GM23248 (cell line): ENCODE measurements at regions of chrX and their contacts with region 1.

Region 1: GRCh38 chrX:85111347-85111746 is 107.7 kb downstream of the APOOL start:
- DNase-seq: peak; percentile 31
- H3K4me3 ChIP-seq: no peak overlapping the region
- H3K27ac ChIP-seq: no peak overlapping the region
- H3K4me1 ChIP-seq: no peaks in the 10 kb centered on the region
- H3K27me3 ChIP-seq: no peaks in the 10 kb centered on the region

Region 2: GRCh38 chrX:84993150-84993549 is 118.2 kb before region 1 on chrX:
- in situ Hi-C with region 1: no loop called
- DNase-seq: no peak
- H3K4me3 ChIP-seq: no peak overlapping the region
- H3K27ac ChIP-seq: no peak overlapping the region
- H3K4me1 ChIP-seq: no peaks in the 10 kb centered on the region
- H3K27me3 ChIP-seq: no peaks in the 10 kb centered on the region

Region 3: GRCh38 chrX:85213792-85214530 is 102.6 kb after region 1 on chrX:
- in situ Hi-C with region 1: no loop called
- DNase-seq: no peak
- H3K4me3 ChIP-seq: no peak overlapping the region
- H3K27ac ChIP-seq: no peak overlapping the region
- H3K4me1 ChIP-seq: no peaks in the 10 kb centered on the region
- H3K27me3 ChIP-seq: no peaks in the 10 kb centered on the region

Region 4: DNA sequence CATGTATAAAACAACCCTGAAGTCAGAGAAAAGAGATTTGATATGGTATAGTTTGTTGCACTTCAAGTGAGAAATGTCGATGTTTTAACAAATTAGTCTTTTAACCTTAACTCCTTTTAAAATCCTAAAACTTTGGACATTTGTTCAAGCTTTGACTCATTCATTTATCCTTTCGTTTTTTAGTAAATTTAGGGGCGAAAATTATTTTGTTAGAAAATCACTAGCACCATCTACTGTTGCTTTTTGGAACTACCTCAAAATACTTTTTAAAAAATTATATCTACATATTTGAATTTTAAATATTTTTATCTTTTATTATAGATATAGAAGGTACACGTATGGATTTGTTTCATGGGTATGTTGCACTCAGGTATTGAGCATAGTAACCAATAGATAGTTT is 433.3 kb after region 1 on chrX:
- in situ Hi-C with region 1: loop called (anchors 25 kb)
- DNase-seq: peak; percentile 2
- H3K4me3 ChIP-seq: no peak overlapping the region
- H3K27ac ChIP-seq: no peak overlapping the region
- H3K4me1 ChIP-seq: no peaks in the 10 kb centered on the region
- H3K27me3 ChIP-seq: no peaks in the 10 kb centered on the region

Region 5: GRCh38 chrX:85859426-85859825 is 748.1 kb after region 1 on chrX:
- in situ Hi-C with region 1: no loop called
- DNase-seq: no peak
- H3K4me3 ChIP-seq: no peak overlapping the region
- H3K27ac ChIP-seq: no peak overlapping the region
- H3K4me1 ChIP-seq: no peaks in the 10 kb centered on the region
- H3K27me3 ChIP-seq: no peaks in the 10 kb centered on the region